ENCODE measurements at regions of chr3 and their contacts with region 1.

Region 1: DNA sequence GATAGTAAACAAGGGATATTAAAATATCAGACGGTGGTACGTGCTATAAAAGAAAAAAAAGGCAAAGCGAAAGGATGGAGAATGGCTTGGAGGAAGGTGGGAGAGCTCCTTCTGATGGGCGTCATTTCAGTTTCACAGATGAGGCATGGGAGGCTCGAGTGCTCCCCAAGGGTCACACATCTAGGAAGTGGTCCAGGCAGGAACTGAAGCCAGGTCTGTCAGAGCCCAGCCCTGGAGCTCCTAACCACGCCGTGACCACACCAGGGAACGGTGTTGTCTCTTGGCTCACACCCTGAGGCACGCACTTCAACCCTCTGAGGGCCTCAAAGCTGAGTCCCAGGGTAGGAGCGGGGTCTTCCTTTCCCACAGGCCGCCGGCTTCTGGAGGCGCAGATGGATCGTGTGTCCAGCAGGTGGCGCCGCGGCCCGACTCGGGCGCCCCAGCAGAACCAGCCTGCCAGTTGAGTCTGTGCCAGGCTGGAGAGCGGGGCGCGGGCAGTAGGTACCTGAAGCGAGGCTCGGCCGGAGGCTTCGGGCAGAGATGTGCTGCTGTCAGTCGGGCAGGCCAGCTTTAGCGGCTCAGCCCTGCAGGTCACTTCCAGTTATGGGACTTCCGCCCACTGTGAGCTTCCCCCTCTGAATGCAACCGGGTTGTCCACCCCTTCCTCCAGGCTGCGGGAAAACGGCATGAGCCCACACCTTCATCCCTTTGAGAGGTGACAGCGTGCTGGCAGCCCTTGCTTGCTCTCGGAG is 68.1 kb downstream of the SLC6A1 start:
- DNase-seq: peak; percentile 80
- ATAC-seq: peak; percentile 87
- H3K4me3 Mint-ChIP-seq: peak overlapping the region; percentile 60
- H3K27ac Mint-ChIP-seq: no peak overlapping the region
- H3K4me1 Mint-ChIP-seq: no peaks in the 10 kb centered on the region
- H3K27me3 Mint-ChIP-seq: peaks cover 35% of the 10 kb centered on the region
- CTCF ChIP-seq: peak; percentile 82

Region 2: DNA sequence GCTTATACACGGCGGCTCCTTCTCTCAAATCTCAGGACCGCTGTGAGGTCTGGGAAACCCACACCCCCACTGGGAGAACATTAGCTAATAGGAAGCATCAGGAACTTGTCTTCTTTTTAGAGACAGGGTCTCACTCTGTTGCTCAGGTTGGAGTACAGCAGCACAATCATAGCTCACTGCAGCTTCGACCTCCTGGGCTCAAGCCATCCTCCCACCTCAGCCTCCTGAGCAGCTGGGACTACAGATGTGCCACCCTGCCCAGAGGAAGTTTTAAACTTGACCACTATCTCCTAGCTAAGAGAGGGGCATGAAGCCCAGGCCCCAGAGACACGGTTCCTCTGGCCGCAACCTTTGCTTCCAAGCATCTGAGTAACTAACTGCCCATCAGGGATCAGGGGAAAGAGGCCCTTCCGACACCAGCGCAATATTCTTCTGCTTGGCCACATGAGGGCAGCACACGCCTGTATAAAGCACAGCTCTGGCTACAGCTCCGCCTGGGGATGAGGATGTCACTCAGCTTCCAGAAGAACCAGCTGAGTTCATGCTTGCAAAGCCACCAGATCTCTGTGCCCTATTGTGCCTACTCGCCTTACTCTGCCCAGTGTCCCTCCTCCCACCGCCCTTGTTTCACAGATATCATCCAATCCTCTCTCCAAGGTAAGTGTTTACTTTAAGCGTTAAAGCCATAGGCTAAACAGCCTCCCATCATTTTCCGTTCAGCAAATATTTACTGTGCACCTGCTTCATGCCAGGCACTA is 302.2 kb before region 1 on chr3:
- CTCF ChIA-PET with region 1: interaction called, 50 read pairs
- POLR2A ChIA-PET with region 1: no interaction called
- DNase-seq: peak; percentile 69
- ATAC-seq: peak; percentile 92
- H3K4me3 Mint-ChIP-seq: no peak overlapping the region
- H3K27ac Mint-ChIP-seq: no peak overlapping the region
- H3K4me1 Mint-ChIP-seq: peaks cover 8% of the 10 kb centered on the region
- H3K27me3 Mint-ChIP-seq: peaks cover 25% of the 10 kb centered on the region
- CTCF ChIP-seq: peak; percentile 58

Region 3: DNA sequence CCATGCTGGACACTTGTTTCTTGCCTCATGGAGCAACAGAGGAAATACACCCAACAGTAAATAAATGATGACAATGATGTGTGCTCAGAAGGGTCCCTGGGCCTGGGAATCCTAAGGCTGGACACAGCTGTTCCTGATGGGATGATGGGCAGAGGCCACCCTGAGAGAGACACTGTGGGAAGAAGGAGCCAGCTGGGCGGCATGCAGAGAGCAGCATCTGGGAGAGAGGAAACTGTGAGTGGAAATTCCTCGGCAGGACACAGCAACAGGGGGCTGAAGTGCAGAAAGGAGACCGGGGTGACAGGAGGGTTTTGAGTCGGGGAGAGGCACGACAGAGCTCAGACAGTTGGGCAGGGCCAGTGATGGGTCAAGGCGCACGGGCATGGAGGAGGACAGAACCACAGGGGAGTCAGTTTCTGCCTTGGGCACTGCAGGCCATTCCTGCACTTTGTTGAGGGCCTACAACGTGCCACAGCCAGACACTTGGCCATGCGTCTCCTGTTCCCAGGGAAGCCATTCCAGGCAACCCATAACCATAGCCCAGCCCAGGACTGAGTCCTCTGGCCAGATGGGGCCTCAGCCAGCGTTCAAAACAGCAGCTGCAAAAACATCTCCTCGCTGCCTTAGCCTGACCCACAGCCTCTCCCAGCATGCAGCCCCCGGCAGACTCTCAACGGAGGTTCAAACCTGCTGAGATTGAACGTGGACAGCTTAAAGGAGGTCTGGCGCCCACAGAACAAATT is 104.8 kb before region 1 on chr3:
- CTCF ChIA-PET with region 1: interaction called, 27 read pairs
- POLR2A ChIA-PET with region 1: no interaction called
- DNase-seq: no peak
- ATAC-seq: no peak
- H3K4me3 Mint-ChIP-seq: no peak overlapping the region
- H3K27ac Mint-ChIP-seq: no peak overlapping the region
- H3K4me1 Mint-ChIP-seq: no peaks in the 10 kb centered on the region
- H3K27me3 Mint-ChIP-seq: no peaks in the 10 kb centered on the region
- CTCF ChIP-seq: no peak

Region 4: GRCh38 chr3:11001020-11001656 is 59.5 kb before region 1 on chr3:
- CTCF ChIA-PET with region 1: interaction called, 27 read pairs
- POLR2A ChIA-PET with region 1: no interaction called
- DNase-seq: no peak
- ATAC-seq: no peak
- H3K4me3 Mint-ChIP-seq: no peak overlapping the region
- H3K27ac Mint-ChIP-seq: no peak overlapping the region
- H3K4me1 Mint-ChIP-seq: peaks cover 5% of the 10 kb centered on the region
- H3K27me3 Mint-ChIP-seq: peaks cover 23% of the 10 kb centered on the region
- CTCF ChIP-seq: no peak

Region 5: DNA sequence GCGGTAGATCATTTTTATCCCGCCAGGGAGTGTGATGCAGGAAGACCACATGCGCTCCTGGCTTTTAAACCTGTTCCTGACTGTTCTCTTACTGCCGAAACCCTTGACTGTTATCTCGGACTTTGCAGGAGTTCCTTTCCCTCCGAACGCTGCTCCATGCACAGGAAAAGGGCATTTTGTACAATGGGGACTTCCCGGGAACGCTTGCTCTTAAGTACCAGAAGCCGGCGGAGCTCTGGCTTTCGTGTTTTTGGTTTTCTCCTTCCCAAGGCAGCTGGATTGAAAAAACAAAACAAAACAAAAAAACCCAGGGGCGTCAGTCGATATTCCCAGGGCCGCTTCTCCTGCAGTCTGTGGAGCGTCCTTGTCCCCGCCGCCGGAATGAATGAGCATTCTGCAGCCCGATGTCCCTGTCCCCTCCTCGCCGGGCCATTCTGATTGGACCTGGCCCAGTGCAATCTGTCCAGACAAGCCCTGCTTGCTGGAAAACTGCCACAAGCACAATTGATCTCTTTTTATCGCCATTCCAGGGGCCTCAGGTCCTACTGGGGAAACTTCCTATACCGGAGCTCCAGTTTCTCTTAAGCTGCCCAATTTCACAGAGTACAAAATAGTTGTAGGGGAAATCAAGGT is 23.3 kb before region 1 on chr3:
- CTCF ChIA-PET with region 1: interaction called, 23 read pairs
- POLR2A ChIA-PET with region 1: no interaction called
- DNase-seq: no peak
- ATAC-seq: no peak
- H3K4me3 Mint-ChIP-seq: no peak overlapping the region
- H3K27ac Mint-ChIP-seq: no peak overlapping the region
- H3K4me1 Mint-ChIP-seq: no peaks in the 10 kb centered on the region
- H3K27me3 Mint-ChIP-seq: peaks cover 2% of the 10 kb centered on the region; the same call in 1 of the 2 replicates
- CTCF ChIP-seq: no peak

Region 6: GRCh38 chr3:11128682-11129632 is 68.3 kb after region 1 on chr3:
- CTCF ChIA-PET with region 1: no interaction called
- POLR2A ChIA-PET with region 1: no interaction called
- DNase-seq: no peak
- ATAC-seq: no peak
- H3K4me3 Mint-ChIP-seq: no peak overlapping the region
- H3K27ac Mint-ChIP-seq: no peak overlapping the region
- H3K4me1 Mint-ChIP-seq: no peaks in the 10 kb centered on the region; the same call in 1 of the 2 replicates
- H3K27me3 Mint-ChIP-seq: peaks cover 2% of the 10 kb centered on the region
- CTCF ChIP-seq: no peak

Region 7: GRCh38 chr3:11140054-11140712 is 79.5 kb after region 1 on chr3:
- CTCF ChIA-PET with region 1: no interaction called
- POLR2A ChIA-PET with region 1: no interaction called
- DNase-seq: no peak
- ATAC-seq: no peak
- H3K4me3 Mint-ChIP-seq: no peak overlapping the region
- H3K27ac Mint-ChIP-seq: no peak overlapping the region
- H3K4me1 Mint-ChIP-seq: no peaks in the 10 kb centered on the region
- H3K27me3 Mint-ChIP-seq: peaks cover 3% of the 10 kb centered on the region; the same call in 1 of the 2 replicates
- CTCF ChIP-seq: no peak

Region 8: DNA sequence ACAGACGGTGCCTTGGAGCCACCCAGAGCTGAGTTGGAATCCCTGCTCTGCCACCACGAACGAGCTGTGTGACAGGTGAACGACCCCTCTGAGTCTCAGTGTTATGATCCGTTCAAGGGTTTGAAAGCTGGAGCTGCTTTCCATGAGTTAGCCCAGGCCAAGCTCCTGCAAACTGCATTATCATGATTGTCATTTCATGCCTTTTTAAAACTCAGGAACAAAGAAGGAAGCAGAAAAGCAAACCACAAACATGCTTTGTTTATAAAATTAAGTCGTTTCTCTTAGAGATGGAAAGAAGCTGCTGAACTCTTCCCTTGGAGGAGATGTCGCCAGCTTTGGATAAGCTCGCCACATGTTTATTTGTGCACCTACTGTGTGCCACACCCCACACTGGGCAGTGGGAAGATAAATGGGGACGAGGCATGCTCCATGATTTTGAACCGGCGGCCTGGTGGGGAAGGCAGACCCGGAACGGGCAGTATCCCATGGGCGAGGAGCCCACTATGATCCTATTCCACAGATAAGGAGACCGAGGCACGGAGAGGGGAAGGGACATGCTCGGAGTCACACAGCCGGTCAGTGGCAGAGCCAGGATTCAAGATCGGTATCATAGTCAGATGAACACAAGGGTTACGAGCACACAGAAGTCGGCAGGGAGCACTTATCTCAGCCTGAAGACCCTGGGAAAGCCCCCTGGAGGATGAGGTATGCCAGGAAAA is 109.5 kb after region 1 on chr3:
- CTCF ChIA-PET with region 1: interaction called, 16 read pairs
- POLR2A ChIA-PET with region 1: no interaction called
- DNase-seq: no peak
- ATAC-seq: 0 out of 2 replicates have a peak, but pooled peaks have one; percentile 26
- H3K4me3 Mint-ChIP-seq: no peak overlapping the region
- H3K27ac Mint-ChIP-seq: no peak overlapping the region
- H3K4me1 Mint-ChIP-seq: no peaks in the 10 kb centered on the region
- H3K27me3 Mint-ChIP-seq: peaks cover 3% of the 10 kb centered on the region; the same call in 1 of the 2 replicates
- CTCF ChIP-seq: no peak

Region 9: GRCh38 chr3:11335056-11335608 is 274.5 kb after region 1 on chr3:
- CTCF ChIA-PET with region 1: interaction called, 16 read pairs
- POLR2A ChIA-PET with region 1: no interaction called
- DNase-seq: no peak
- ATAC-seq: peak; percentile 81
- H3K4me3 Mint-ChIP-seq: no peak overlapping the region
- H3K27ac Mint-ChIP-seq: no peak overlapping the region; the same call in 1 of the 2 replicates
- H3K4me1 Mint-ChIP-seq: no peaks in the 10 kb centered on the region
- H3K27me3 Mint-ChIP-seq: no peaks in the 10 kb centered on the region
- CTCF ChIP-seq: peak; percentile 36

Measured in WTC11 (cell line).